K562 (cell line): ENCODE measurements at regions of chr16 and their contacts with region 1.

Region 1: DNA sequence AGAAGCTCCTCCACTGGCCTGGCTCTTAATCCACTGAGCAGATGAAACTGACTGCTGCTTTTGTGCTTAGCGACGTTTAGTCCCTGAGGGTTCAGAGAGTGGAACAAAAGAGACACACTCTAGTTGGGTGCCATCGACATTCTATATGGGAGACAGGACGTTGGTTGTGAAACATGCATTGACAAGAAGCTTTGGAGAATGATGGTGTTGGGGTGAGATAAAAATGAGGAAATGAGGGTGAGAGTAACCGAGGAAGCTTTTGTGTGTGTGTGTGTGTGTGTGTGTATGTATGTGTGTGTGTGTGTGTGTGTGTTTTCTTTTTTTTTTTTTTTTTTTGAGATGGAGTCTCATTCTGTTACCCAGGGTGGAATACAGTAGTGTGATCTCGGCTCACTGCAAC is 89.5 kb downstream of the ABCC1 start:
- DNase-seq: no peak
- ATAC-seq: no peak
- H3K4me3 ChIP-seq: no peak overlapping the region
- H3K27ac ChIP-seq: no peak overlapping the region
- H3K4me1 ChIP-seq: no peaks in the 10 kb centered on the region; a peak in 1 of 5 replicates
- H3K27me3 ChIP-seq: no peaks in the 10 kb centered on the region
- CTCF ChIP-seq: no peak
- EP300 ChIP-seq: no peak
- POLR2A ChIP-seq: no peak
- RAD21 ChIP-seq: no peak

Region 2: GRCh38 chr16:15932939-15933338 is 106.0 kb before region 1 on chr16:
- CTCF ChIA-PET with region 1: no interaction called
- POLR2A ChIA-PET with region 1: no interaction called
- in situ Hi-C with region 1: no loop called
- intact Hi-C with region 1: no loop called
- DNase-seq: no peak
- ATAC-seq: no peak
- H3K4me3 ChIP-seq: no peak overlapping the region
- H3K27ac ChIP-seq: no peak overlapping the region
- H3K4me1 ChIP-seq: peaks cover 0 to 8% of the 10 kb centered on the region in 2 experiments; a peak in 3 of 5 replicates
- H3K27me3 ChIP-seq: no peaks in the 10 kb centered on the region
- CTCF ChIP-seq: no peak
- EP300 ChIP-seq: no peak
- POLR2A ChIP-seq: no peak
- RAD21 ChIP-seq: no peak

Region 3: DNA sequence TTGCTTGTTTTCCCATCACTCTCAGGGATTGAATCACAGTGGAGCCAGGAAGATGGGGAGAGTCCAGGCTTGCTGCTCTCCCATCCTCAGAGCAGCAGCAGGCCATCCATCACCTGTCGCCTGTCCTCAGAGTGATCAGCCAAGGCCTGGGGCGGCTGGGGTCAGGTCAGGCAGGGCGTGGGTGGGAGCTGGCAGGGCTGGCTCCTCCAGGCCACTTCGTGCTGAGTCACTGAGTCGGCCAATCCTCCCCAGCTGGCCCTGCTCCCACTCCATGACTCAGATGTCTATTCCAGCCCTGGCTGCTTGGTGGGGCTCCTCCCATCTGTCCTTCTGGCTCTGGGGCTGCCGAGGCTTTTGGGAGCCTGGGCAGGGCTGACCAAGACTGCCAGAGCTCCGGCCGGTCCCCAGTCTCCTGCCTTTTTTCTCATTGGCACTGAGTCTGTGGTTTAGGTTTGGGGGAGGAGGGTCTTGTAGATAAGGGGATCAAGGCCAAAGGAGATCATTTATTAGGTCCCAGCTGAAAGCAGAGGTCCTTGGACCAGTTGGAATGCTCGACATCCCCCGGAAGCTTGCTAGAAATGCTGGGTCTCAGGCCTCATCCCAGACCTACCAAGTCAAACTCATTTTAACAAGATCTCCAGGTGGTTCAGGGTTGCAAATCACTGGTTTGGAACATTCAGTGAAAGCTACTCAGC is 16.8 kb before region 1 on chr16:
- CTCF ChIA-PET with region 1: no interaction called
- POLR2A ChIA-PET with region 1: interaction called, 26 read pairs
- in situ Hi-C with region 1: no loop called
- intact Hi-C with region 1: no loop called
- DNase-seq: peak; percentile 95 to 98 (median 95)
- ATAC-seq: peak; percentile 98
- H3K4me3 ChIP-seq: peak overlapping the region; percentile 27; the same call in 1 of the 2 replicates
- H3K27ac ChIP-seq: peak overlapping the region; percentile 100
- H3K4me1 ChIP-seq: peaks cover 45 to 50% of the 10 kb centered on the region in 2 experiments
- H3K27me3 ChIP-seq: no peaks in the 10 kb centered on the region
- CTCF ChIP-seq: peak in 1 of 3 experiments; percentile 3; a peak in 1 of 6 replicates
- EP300 ChIP-seq: peak; percentile 91
- POLR2A ChIP-seq: peak; percentile 75
- RAD21 ChIP-seq: peak in 1 of 2 experiments; percentile 44; a peak in 2 of 4 replicates